ENCODE measurements at regions of chr11 and their contacts with region 1.

Region 1: DNA sequence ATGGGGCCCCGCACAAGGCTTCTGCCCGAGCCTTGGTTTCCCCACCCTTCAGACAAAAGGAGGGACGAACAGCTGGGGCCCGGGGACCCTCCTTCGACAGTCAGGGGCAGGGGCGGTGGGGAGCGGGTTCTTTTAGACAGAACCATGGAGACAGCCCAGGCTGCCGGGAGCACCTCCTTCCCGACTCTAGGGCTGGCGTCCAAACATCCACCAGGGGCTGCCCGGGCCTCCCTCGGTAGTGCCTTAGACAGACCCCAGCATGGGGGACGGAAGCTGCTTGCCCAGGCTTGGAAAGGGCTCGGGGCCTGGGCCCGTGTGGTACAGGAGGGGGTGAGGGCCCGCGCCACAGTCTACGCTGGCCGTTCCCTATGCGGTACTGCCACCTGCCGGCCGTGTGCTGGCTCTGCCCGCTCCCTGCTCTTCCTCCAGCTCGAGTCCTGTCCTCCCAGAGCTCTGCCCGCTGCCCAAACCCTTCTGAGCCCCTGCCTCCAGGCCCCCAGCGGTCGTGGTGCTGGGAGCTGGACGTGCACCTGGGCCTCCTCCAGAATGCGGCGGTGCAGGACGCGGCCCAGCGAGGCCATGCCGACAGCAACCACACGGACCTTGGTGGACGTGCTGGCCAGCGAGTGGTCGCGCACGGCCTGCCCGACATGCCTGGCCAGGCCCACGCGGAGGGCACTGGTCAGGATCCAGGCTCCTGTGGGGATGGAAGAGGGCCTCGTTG is 20.1 kb downstream of the TSSC4 start:
- DNase-seq: peak; percentile 75
- ATAC-seq: peak; percentile 93
- H3K4me3 Mint-ChIP-seq: no peak overlapping the region
- H3K27ac Mint-ChIP-seq: no peak overlapping the region
- H3K4me1 Mint-ChIP-seq: no peaks in the 10 kb centered on the region
- H3K27me3 Mint-ChIP-seq: no peaks in the 10 kb centered on the region

Region 2: GRCh38 chr11:2186669-2187279 is 233.9 kb before region 1 on chr11:
- CTCF ChIA-PET with region 1: interaction called, 17 read pairs
- DNase-seq: peak; percentile 60
- ATAC-seq: peak; percentile 77
- H3K4me3 Mint-ChIP-seq: no peak overlapping the region
- H3K27ac Mint-ChIP-seq: no peak overlapping the region
- H3K4me1 Mint-ChIP-seq: no peaks in the 10 kb centered on the region
- H3K27me3 Mint-ChIP-seq: peaks cover 6% of the 10 kb centered on the region

Region 3: GRCh38 chr11:2314525-2315394 is 105.9 kb before region 1 on chr11:
- CTCF ChIA-PET with region 1: interaction called, 30 read pairs
- DNase-seq: no peak
- ATAC-seq: no peak
- H3K4me3 Mint-ChIP-seq: no peak overlapping the region
- H3K27ac Mint-ChIP-seq: no peak overlapping the region
- H3K4me1 Mint-ChIP-seq: no peaks in the 10 kb centered on the region
- H3K27me3 Mint-ChIP-seq: no peaks in the 10 kb centered on the region

Region 4: DNA sequence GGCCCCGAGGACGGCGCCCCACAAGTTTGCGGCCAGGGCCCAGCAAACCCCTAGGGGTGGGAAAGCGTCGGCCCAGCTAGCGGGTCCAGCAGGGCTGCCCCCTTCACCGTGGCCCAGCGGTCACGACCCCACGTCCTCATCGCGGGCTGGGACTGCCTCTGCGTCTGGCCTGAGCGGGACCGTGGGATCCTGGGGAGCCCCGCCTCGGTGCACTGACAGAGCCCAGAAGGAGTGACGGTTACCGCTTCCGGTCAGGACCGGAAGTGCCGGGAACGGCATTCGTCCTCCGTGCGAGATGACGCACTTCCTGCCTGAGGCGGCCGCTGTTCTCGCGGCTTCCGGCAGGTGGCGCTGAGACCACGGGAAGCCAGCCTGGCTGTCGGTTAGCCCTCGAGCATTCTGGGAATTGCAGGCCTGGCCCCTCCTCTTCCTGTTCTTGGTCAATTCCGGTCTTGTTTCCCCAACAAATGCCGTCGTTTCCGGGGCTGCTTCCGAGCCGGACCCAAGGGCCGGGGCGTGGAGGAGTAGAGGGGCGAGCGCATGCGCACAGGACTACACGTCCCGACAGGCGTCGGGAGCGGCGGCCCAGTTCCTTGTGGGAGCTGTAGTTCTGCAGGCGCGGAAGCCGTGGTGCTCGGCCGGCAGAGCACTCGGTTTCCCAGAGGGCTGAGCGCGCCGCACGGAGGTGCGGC is 20.4 kb before region 1 on chr11 and contains the start of gene TSSC4:
- CTCF ChIA-PET with region 1: interaction called, 63 read pairs
- DNase-seq: peak; percentile 100
- ATAC-seq: peak; percentile 85
- H3K4me3 Mint-ChIP-seq: peak within 1 kb of the TSS; percentile 79
- H3K27ac Mint-ChIP-seq: peak within 1 kb of the TSS; percentile 87
- H3K4me1 Mint-ChIP-seq: peaks cover 16% of the 10 kb centered on the region
- H3K27me3 Mint-ChIP-seq: no peaks in the 10 kb centered on the region
- total RNA-seq, gene TSSC4: 48.4 to 52.1 TPM

Region 5: DNA sequence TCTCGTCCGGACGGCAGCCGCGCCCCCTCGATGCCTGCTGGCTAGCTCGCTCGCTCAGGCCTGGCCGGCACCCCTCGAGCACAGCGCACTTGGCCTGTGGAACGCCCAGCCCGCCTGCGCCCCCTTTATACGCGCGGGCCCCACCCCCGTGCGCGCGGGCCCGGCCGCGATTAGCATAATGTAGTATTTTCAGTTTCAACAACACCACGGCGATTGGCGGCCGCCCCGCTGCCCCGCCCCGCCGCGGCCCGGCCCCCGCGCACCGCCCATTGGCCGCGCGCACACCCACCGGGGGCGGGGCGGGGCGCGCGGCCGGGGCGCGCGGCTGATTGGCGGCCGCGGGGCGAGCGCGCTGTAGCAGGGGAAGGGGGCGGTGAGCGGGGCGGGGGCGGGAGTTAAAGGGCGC is 465.0 kb after region 1 on chr11 and contains the start of gene CDKN1C:
- CTCF ChIA-PET with region 1: interaction called, 15 read pairs
- DNase-seq: peak; percentile 83
- ATAC-seq: peak; percentile 92
- H3K4me3 Mint-ChIP-seq: peak within 1 kb of the TSS; percentile 75
- H3K27ac Mint-ChIP-seq: no peak within 1 kb of the TSS
- H3K4me1 Mint-ChIP-seq: peaks cover 9% of the 10 kb centered on the region
- H3K27me3 Mint-ChIP-seq: peaks cover 35% of the 10 kb centered on the region
- total RNA-seq, gene CDKN1C: 0.44 to 0.87 TPM

Region 6: GRCh38 chr11:2901854-2902783 is 481.5 kb after region 1 on chr11:
- CTCF ChIA-PET with region 1: no interaction called
- DNase-seq: peak; percentile 99
- ATAC-seq: peak; percentile 96
- H3K4me3 Mint-ChIP-seq: peak overlapping the region; percentile 68
- H3K27ac Mint-ChIP-seq: peak overlapping the region; percentile 72
- H3K4me1 Mint-ChIP-seq: peaks cover 36% of the 10 kb centered on the region
- H3K27me3 Mint-ChIP-seq: peaks cover 3% of the 10 kb centered on the region